RWPE1 (cell line): ENCODE measurements at regions of chr9 and their contacts with region 1.

Region 1: DNA sequence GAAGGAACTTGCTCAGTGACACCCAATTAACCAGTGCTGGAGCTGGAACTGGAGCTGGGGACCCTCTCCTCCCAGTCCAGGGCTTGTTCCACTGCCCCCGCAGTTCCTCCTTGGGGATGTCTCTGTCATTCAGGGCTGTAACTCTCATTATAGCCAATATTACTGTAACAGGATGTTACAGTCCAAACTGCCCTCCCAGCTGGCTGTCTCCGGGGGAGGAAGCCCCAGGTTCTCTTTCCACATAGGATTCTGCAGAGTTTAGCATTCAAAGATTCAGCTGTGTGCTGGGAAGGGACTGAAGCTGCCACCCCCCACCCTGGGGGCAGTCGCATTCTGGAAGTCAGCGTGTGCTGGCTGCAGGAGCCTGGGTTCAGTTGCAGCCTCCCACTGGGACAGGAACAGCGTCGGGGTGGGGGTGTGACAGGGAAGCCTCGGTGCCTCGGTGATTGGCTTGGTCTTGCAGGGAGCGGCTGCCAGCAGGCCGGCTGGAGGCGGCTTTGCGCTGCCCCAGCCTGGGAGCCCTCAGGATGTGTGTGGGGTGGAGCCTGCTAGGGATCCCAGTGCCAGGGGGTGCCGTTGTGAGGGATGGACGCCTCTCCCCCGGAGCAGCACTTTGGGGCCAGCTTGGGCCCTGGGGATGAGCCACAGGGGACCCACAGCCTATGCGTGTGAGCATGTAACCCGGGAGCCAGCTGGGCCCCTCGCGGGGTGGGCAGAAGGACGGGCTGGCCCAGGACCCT is 101.1 kb downstream of the RGS3 start:
- DNase-seq: peak; percentile 97
- H3K27ac ChIP-seq: peak overlapping the region; percentile 93
- CTCF ChIP-seq: no peak

Region 2: GRCh38 chr9:113484258-113484730 is 80.4 kb before region 1 on chr9:
- CTCF ChIA-PET with region 1: no interaction called
- POLR2A ChIA-PET with region 1: no interaction called
- DNase-seq: no peak
- H3K27ac ChIP-seq: no peak overlapping the region
- CTCF ChIP-seq: no peak

Region 3: DNA sequence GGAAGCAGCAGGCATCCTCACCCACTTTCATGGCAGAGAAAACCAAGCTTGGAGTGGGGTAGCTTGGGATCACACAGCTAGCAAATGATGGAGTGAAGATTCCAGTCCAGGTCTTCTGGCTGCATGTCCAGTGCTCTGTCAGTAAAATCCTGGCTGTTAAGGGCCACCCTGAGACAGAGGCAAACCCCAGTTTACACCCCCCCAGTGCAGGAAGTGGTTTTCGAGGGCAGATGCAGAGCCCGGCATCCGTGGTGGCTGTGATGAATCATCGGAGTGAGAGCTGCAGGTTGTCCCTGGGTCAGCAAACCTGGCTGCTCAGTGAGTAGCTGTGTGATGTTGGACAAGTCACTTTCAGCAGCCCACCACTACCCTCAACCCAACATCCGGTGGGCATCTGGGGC is 14.2 kb after region 1 on chr9:
- CTCF ChIA-PET with region 1: interaction called, 12 read pairs
- POLR2A ChIA-PET with region 1: interaction called, 10 read pairs
- DNase-seq: peak; percentile 98
- H3K27ac ChIP-seq: peak overlapping the region; percentile 74
- CTCF ChIP-seq: no peak